Endothelial cell of umbilical vein (primary cell): ENCODE measurements at regions of chr9 and their contacts with region 1.

Region 1: DNA sequence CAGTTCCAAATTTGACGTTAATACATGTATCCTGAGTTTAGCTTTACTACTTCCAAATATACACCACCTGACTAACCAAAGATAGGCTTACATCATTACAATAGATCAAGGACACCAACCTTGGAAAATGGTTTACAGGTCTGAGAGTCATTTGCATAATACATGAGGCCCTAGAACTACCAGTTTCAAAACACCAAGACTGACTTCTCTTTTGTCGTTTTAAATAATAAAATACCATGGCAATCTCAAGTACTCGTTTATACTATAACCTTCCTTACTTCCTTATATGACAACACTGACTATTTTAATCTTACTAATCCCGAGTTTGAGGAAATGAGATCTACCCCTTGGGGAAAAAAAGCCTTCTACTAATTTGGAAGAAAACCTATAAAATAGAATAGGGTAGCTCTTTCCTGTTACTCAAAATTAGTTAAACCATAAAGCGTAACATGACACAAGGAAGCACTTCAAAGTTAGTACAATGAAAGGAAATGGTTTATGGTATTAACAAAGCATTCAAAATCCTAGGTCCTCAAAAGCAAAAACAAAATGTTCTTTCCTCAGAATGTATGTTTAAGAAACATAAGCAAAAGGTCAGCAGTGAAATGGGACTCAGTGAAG is 42.1 kb downstream of the UBQLN1 start:
- DNase-seq: peak; percentile 83
- H3K4me3 ChIP-seq: peak overlapping the region in 1 of 3 experiments; percentile 13
- H3K27ac ChIP-seq: peak overlapping the region; percentile 87
- H3K4me1 ChIP-seq: peaks cover 31% of the 10 kb centered on the region
- H3K27me3 ChIP-seq: no peaks in the 10 kb centered on the region
- CTCF ChIP-seq: no peak
- POLR2A ChIP-seq: no peak

Region 2: GRCh38 chr9:83521411-83521810 is 144.3 kb before region 1 on chr9:
- CTCF ChIA-PET with region 1: no interaction called
- POLR2A ChIA-PET with region 1: no interaction called
- dilution Hi-C with region 1: no loop called
- intact Hi-C with region 1: no loop called
- DNase-seq: no peak
- H3K4me3 ChIP-seq: no peak overlapping the region
- H3K27ac ChIP-seq: no peak overlapping the region
- H3K4me1 ChIP-seq: no peaks in the 10 kb centered on the region
- H3K27me3 ChIP-seq: peaks cover 0 to 2% of the 10 kb centered on the region in 2 experiments
- CTCF ChIP-seq: no peak
- POLR2A ChIP-seq: no peak

Region 3: DNA sequence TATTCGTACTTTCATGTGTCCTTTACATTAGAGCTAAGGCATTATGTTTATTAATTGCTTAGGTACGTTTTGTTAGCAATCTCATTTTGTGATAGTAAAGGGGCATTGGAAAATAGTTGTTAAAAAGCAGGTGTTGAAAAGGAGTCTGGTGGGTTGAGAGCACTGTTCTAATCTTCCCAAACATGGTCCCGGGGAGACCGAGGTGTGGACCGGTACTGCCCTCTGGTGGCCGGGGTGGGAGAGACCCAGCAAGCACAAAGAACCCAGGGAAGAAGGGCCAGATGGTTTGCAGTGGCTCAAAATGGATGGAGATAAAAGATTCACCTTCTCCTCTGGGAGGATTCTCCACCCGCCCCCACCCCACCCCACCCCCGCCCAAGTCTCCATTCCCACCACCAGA is 16.6 kb before region 1 on chr9:
- CTCF ChIA-PET with region 1: interaction called, 15 read pairs
- POLR2A ChIA-PET with region 1: interaction called, 3 read pairs
- dilution Hi-C with region 1: no loop called
- intact Hi-C with region 1: no loop called
- DNase-seq: peak; percentile 32
- H3K4me3 ChIP-seq: no peak overlapping the region
- H3K27ac ChIP-seq: no peak overlapping the region
- H3K4me1 ChIP-seq: no peaks in the 10 kb centered on the region
- H3K27me3 ChIP-seq: no peaks in the 10 kb centered on the region
- CTCF ChIP-seq: peak; percentile 70 to 77
- POLR2A ChIP-seq: no peak

Region 4: DNA sequence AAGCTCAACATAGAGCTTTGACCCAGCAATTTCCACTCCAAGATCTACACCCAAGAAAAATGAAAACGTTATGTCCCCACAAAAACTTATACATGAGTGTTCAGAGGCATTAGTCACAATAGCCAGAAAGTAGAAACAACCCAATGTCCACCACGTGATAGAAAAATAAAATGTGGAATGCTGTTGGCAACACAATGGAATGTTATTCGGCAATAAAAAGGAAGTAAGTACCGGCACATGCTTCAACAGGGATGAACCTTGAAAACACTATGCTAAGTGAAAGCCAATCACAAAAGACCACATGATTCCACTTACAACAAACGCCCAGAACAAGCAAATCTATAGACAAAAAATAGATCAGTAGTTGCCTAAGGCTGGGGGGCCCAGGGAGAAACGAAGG is 36.1 kb after region 1 on chr9:
- CTCF ChIA-PET with region 1: interaction called, 21 read pairs
- POLR2A ChIA-PET with region 1: interaction called, 11 read pairs
- dilution Hi-C with region 1: no loop called
- intact Hi-C with region 1: loop called (anchors 1 kb)
- DNase-seq: peak; percentile 88
- H3K4me3 ChIP-seq: peak overlapping the region in 1 of 3 experiments; percentile 22
- H3K27ac ChIP-seq: peak overlapping the region; percentile 57
- H3K4me1 ChIP-seq: peaks cover 44% of the 10 kb centered on the region
- H3K27me3 ChIP-seq: no peaks in the 10 kb centered on the region
- CTCF ChIP-seq: no peak
- POLR2A ChIP-seq: no peak

Region 5: GRCh38 chr9:83722686-83723085 is 57.0 kb after region 1 on chr9:
- CTCF ChIA-PET with region 1: no interaction called
- POLR2A ChIA-PET with region 1: no interaction called
- dilution Hi-C with region 1: no loop called
- intact Hi-C with region 1: no loop called
- DNase-seq: no peak
- H3K4me3 ChIP-seq: no peak overlapping the region
- H3K27ac ChIP-seq: no peak overlapping the region
- H3K4me1 ChIP-seq: no peaks in the 10 kb centered on the region
- H3K27me3 ChIP-seq: peaks cover 0 to 10% of the 10 kb centered on the region in 2 experiments
- CTCF ChIP-seq: no peak
- POLR2A ChIP-seq: no peak